SK-N-SH (cell line): ENCODE measurements at regions of chr11 and their contacts with region 1.

Region 1: GRCh38 chr11:15101072-15101709 is 13.5 kb upstream of the INSC start:
- DNase-seq: peak; percentile 73
- H3K4me3 ChIP-seq: no peak overlapping the region
- H3K27ac ChIP-seq: no peak overlapping the region
- H3K4me1 ChIP-seq: no peaks in the 10 kb centered on the region; a peak in 1 of 4 replicates
- H3K27me3 ChIP-seq: no peaks in the 10 kb centered on the region
- CTCF ChIP-seq: peak; percentile 95
- EP300 ChIP-seq: no peak
- RAD21 ChIP-seq: peak; percentile 90

Region 2: DNA sequence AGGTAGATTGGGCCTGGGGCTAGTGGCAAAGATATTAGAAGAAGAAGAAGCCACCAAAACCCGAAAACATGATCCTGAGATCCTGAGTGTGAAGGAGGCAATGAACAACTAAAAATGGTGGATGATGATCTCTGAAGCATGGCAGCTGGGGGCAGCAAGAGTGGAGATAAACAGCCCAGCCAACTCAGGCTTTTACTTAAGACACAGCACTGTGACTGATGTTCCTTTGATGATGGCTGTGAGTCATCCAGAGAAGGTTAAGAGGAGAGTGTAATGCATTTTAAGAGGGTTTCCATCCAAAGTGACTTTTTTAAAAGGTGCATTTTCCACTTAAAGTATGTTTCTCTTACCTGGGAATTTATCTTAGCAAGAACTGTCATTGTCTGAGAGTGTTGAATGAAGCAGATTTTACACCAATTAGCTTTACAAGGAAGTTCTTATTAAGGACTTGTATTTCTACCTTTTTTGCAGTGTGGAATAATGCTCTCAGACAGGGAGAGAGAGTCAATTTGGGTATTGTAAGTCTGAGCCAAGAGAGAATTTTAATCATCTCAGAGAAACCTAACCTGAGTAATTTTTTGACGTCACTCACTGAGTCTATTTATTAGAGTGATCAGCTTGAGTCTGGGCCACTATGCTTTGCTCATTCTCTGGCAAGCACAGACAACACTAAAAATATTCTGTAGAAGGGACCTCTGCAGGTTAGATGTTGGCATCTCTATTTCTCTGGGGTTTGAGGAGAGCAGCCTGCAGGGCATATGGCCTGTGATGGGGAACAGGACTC is 41.9 kb before region 1 on chr11:
- CTCF ChIA-PET with region 1: no interaction called
- POLR2A ChIA-PET with region 1: no interaction called
- DNase-seq: no peak
- H3K4me3 ChIP-seq: no peak overlapping the region
- H3K27ac ChIP-seq: no peak overlapping the region
- H3K4me1 ChIP-seq: no peaks in the 10 kb centered on the region
- H3K27me3 ChIP-seq: no peaks in the 10 kb centered on the region
- CTCF ChIP-seq: no peak
- EP300 ChIP-seq: no peak
- RAD21 ChIP-seq: no peak

Region 3: GRCh38 chr11:15118431-15118830 is 17.2 kb after region 1 on chr11:
- CTCF ChIA-PET with region 1: interaction called, 67 read pairs
- POLR2A ChIA-PET with region 1: no interaction called
- DNase-seq: no peak
- H3K4me3 ChIP-seq: no peak overlapping the region
- H3K27ac ChIP-seq: no peak overlapping the region
- H3K4me1 ChIP-seq: peaks cover 0 to 7% of the 10 kb centered on the region in 2 experiments; a peak in 1 of 4 replicates
- H3K27me3 ChIP-seq: no peaks in the 10 kb centered on the region; the same call in 1 of the 2 replicates
- CTCF ChIP-seq: no peak
- EP300 ChIP-seq: no peak
- RAD21 ChIP-seq: no peak

Region 4: DNA sequence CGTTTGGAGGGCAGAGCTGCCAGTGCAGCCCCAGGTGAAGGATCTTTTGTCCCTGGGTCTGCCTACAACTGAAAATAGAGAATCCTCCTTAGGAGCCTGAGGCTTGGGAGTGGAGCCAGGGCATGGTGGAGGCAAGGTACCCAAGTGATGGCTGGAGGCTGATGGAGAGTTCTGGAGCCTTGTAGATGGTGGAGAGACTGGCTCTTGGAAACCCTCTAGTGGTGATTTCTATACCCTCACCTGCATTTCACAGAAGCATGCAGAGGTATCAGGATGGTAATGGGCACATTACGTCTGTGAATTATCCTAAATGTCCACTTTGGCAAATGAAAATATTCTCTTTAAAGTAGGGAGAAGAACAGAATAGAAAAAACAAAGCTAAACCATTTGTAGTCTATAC is 57.9 kb after region 1 on chr11:
- CTCF ChIA-PET with region 1: interaction called, 21 read pairs
- POLR2A ChIA-PET with region 1: no interaction called
- DNase-seq: peak; percentile 27
- H3K4me3 ChIP-seq: no peak overlapping the region
- H3K27ac ChIP-seq: no peak overlapping the region
- H3K4me1 ChIP-seq: peaks cover 0 to 10% of the 10 kb centered on the region in 2 experiments; a peak in 2 of 4 replicates
- H3K27me3 ChIP-seq: no peaks in the 10 kb centered on the region
- CTCF ChIP-seq: peak; percentile 60
- EP300 ChIP-seq: no peak
- RAD21 ChIP-seq: peak; percentile 56

Region 5: DNA sequence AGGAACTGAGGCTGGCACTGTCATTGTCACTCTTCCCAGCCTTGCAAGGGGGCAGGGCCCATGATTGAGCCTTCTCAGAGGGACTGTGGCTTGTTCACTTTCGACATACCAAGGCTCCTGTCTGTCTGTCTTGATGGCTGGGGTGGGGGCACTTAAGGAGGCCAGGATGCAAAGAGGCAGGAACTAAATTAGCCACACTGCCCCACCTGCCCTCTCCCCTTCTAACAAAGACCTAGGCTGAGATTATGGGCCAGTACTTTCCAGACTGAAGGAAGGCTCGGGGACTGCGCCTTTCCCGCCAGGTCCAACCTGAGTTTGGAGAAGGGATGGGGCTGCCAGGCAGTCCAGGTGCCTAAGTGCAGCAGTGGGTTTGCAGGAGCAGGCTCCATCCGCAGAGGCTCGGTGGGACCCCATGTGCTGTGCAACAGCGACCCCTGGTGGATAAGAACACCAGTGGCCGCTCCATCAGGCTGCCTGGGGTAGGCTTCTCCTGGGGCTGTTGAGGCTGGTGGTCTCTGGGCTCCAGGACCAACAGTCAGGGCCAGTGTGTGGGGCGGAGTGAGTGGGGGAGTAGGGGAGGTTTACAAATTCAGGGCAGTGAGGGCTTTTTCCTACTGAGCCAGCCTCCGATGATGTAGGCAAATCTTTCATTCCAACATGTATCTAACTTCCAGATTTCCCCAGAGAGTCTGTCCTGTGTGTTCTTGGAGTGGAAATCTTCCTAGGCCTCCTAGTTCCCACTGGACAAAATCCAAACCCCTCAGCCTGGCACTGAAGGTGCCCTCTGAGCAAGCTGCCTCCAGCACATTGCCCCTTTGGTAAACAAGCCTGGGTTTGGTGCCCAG is 107.4 kb after region 1 on chr11:
- CTCF ChIA-PET with region 1: interaction called, 282 read pairs
- POLR2A ChIA-PET with region 1: no interaction called
- DNase-seq: peak; percentile 87
- H3K4me3 ChIP-seq: no peak overlapping the region; a peak in 1 of 4 replicates
- H3K27ac ChIP-seq: no peak overlapping the region
- H3K4me1 ChIP-seq: peaks cover 0 to 6% of the 10 kb centered on the region in 2 experiments; a peak in 1 of 4 replicates
- H3K27me3 ChIP-seq: no peaks in the 10 kb centered on the region
- CTCF ChIP-seq: peak; percentile 83
- EP300 ChIP-seq: no peak
- RAD21 ChIP-seq: peak; percentile 96